ENCODE measurements at regions of chr6 and their contacts with region 1.

Region 1: GRCh38 chr6:41591859-41592502 is 45.8 kb downstream of the FOXP4 start:
- DNase-seq: peak in 3 of 4 donors; percentile 60 to 69 (median 64)
- ATAC-seq: peak; percentile 88
- H3K4me3 ChIP-seq: no peak overlapping the region
- H3K27ac ChIP-seq: no peak overlapping the region
- H3K4me1 ChIP-seq: no peaks in the 10 kb centered on the region
- H3K27me3 ChIP-seq: no peaks in the 10 kb centered on the region
- CTCF ChIP-seq: peak; percentile 92 to 93

Region 2: DNA sequence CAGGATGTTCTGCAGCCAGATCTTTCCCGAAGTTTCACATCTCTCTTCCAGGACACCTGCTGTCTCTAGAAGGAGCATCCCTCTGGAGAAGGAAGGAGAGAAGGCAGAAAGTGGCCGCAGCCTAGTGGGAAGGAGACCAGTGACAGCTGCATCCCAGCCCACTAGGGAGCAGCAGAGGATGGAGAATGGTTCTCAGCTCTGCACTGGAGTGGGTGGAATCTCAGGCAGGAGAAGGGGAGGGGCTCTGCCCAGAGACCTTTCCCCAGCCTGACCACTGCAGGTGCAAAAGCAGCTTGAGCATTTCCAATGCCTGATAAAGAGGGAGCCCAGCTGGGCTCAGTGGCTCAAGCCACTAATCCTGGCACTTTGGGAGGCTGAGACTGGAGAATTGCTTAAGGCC is 224.3 kb before region 1 on chr6:
- intact Hi-C with region 1: loop called in 1 of 2 experiments (anchors 5 kb)
- DNase-seq: peak in 2 of 4 donors; percentile 34 to 78
- ATAC-seq: peak; percentile 69
- H3K4me3 ChIP-seq: no peak overlapping the region
- H3K27ac ChIP-seq: no peak overlapping the region
- H3K4me1 ChIP-seq: peaks cover 5 to 14% of the 10 kb centered on the region in 2 donors
- H3K27me3 ChIP-seq: peaks cover 28 to 95% of the 10 kb centered on the region in 2 donors
- CTCF ChIP-seq: peak in 1 of 2 donors; percentile 22

Region 3: DNA sequence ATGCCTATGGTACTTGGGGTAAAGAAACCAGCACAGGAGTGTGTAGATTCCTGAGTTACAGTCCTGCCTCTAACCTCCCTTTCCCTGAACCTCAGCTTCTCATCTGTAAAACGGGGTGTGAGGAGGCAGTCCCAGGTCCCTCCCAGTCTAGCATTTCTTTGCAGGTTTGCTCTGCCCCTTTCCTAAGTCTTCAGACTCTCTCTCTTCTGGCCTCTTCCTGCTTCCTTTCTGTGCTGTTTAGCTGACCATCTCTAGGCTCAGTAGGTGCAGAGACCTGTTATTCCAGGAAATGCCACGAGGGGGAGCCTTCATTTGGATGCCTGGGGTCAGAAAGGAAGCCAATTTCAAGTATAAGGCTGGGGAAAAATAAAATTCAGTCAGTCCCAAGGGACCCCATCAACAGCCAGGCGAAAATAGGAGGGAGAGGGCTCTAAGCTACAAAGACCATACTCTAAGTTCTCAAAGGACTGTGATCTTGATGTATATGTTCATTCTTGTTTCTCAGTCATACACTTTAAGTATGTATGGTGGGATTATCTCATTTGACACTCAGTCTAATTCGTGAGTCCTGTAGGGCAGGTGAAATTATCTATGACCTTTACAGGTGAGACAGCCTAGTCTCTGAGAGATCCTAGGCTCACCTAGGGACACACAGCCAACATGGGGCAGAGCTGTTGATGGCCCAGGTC is 167.5 kb before region 1 on chr6:
- intact Hi-C with region 1: loop called in 1 of 2 experiments (anchors 10 kb)
- DNase-seq: peak in 3 of 4 donors; percentile 69 to 85 (median 77)
- ATAC-seq: peak; percentile 70
- H3K4me3 ChIP-seq: no peak overlapping the region
- H3K27ac ChIP-seq: no peak overlapping the region
- H3K4me1 ChIP-seq: peaks cover 8 to 30% of the 10 kb centered on the region in 2 donors
- H3K27me3 ChIP-seq: peaks cover 16 to 57% of the 10 kb centered on the region in 2 donors
- CTCF ChIP-seq: peak; percentile 59 to 85

Region 4: DNA sequence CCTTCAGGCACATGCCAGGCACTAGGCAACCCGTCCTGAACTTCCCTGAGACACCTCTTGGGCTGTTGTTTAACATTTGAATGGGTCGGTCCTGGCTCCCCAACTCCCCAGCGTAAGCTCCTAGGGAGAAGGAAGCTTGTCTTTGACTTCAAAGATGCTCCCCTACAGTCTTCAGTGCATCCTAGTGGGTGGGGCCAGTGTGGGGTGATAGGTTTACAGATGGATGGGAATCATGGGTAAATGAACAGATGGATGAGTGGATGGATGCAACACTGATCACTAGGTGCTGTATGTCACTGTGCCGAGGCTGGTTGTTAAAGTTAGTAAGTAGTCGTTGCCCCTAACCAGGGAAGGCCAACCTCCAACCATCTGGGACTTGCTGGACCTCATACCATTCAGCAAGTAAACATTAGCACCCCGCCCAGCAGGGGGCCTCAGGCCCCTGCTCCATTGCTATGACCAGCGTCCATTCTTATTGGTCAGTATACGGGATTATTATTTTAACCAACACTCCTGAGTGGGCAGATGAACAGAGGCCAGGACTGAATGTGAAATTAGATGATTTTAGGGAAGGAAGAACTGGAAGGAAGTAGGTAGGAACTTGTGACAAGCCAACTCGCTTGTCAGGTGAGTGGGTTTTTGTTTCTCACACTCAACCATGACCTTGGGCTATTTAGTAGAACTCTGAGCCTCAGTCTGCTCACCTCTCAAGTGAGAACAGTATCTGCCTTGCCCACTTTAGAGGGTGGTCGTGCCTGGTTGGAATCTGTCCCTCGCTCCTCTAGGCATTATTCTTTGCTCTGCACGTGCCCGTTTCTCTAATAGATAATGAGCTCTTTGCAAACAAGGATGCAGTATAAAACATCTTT is 128.7 kb before region 1 on chr6:
- intact Hi-C with region 1: loop called in 1 of 2 experiments (anchors 5 kb)
- DNase-seq: peak in 2 of 4 donors; percentile 64 to 80
- ATAC-seq: peak; percentile 97
- H3K4me3 ChIP-seq: no peak overlapping the region
- H3K27ac ChIP-seq: no peak overlapping the region
- H3K4me1 ChIP-seq: no peaks in the 10 kb centered on the region
- H3K27me3 ChIP-seq: peaks cover 0 to 13% of the 10 kb centered on the region in 2 donors
- CTCF ChIP-seq: peak; percentile 44 to 56

Region 5: DNA sequence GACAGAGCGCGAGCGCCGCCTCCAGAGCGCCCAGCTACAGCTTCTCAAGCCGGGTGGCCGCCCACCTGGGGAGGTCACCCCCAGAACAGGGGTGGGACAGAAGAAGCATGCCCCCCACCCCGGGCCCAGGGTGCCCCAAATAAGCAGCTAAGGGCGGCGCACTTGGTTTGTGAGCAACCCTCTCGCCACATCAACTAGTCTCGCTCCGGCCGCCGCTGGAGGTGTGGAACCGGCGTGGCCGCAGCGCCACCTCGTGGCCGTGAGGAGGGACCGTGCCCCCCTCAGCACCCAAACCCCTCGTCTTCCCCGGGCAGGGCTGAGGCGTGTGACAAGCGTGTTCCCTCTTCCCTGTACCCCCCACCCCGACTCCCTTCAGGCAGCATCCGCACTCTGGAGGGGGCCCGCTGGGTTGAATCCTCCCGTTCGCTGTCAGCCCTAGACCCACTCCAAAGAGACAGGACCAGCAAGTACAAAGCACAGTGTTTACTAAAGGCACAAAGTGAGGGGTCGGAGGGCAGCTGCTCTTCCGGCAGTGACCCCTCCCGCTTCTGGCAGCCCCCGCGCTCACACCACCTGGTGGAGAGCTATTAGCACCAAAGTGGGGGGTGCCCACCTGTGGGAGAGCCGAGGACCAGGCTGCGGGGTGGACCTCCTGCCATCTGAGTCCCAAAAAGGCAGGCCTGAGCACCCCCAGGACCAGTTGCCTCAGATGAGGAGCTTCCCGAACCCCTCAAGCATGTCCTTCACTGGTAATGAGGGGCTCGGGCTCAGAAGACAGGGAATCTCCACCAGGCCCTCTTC is 91.7 kb after region 1 on chr6:
- intact Hi-C with region 1: no loop called
- DNase-seq: peak; percentile 78 to 96 (median 85)
- ATAC-seq: peak; percentile 84
- H3K4me3 ChIP-seq: peak overlapping the region; percentile 27 to 36
- H3K27ac ChIP-seq: no peak overlapping the region
- H3K4me1 ChIP-seq: peaks cover 11 to 25% of the 10 kb centered on the region in 2 donors
- H3K27me3 ChIP-seq: peaks cover 0 to 3% of the 10 kb centered on the region in 2 donors
- CTCF ChIP-seq: peak; percentile 87 to 92